ENCODE measurements at regions of chr1 and their contacts with region 1.

Region 1: DNA sequence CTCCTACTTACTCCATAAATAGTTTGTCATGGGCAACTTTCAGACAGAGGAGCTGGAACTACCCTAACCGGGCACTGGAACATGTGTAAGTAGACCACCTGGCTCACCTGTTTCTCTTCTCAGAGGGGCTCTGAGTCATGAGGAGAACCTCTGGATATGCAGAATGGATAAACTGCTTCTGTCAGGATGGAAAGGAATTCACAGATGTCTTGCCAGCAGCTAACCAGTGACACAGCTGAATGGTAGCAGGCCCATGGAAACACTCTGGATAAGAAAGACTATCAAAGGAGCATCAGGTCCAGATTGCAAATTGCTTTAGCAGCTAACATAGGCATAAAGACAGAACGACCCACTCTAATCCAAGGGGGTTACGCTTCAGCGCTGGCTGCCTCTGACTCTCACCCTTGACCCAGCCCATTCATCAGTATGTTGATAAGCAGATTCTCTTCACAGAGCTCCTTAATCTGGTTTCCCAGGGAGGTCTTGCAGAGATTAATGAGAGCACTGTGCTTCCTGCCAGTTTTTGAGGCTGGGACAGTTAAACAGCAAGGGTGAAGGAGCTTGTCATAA is 54.2 kb downstream of the HIVEP3 start:
- DNase-seq: no peak
- H3K4me3 ChIP-seq: no peak overlapping the region
- H3K27ac ChIP-seq: no peak overlapping the region
- H3K4me1 ChIP-seq: peaks cover 6 to 33% (median 21%) of the 10 kb centered on the region in 4 experiments
- H3K27me3 ChIP-seq: no peaks in the 10 kb centered on the region

Region 2: DNA sequence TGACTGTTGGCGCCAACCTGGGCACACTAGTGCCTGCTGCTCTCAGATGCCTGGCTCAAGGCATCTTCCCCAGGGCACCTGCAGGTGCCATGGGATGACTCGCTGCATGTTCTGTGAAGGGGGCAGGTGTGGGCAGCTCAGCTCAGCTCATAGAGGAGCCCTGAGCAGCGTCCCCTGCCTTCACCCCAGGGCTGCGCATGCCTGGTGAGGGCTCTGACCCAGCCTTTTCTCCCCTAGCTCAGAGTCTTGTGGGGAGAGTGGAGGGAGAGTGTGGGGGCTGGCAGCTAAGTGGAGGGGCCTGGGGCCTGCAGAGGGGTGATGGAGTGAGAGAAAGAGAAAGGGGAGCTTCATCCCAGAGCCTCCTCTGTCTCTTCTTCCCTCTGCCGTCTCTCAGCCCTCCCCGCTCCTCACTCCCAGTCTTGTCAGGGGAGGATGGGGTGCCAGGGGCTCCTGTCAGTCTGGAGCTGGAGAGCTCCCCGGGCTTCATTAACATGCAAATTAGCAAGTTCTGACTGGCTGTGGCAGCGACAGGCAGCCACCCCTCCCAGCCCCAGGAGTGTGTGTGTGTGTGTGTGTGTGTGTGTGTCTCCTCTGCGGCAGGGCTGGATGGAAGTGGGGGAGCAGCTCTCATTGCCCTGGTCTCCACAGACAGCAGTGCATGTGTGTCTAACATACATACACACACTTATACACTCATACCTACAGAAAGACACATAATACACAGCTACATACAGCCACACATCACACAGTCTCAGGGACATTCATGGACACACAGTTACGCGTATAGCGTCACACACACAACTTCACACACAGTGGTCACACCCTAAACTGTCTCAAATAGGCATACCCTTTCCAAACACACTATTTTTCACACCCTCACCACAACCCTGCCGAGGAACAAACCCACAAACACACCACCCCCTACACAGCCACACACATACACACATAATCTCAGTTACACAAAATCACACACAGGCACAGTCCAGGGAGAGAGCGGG is 469.3 kb before region 1 on chr1:
- CTCF ChIA-PET with region 1: no interaction called
- POLR2A ChIA-PET with region 1: no interaction called
- DNase-seq: peak in 2 of 3 donors; percentile 48 to 65
- H3K4me3 ChIP-seq: no peak overlapping the region
- H3K27ac ChIP-seq: no peak overlapping the region
- H3K4me1 ChIP-seq: no peaks in the 10 kb centered on the region
- H3K27me3 ChIP-seq: peaks cover 0 to 25% (median 13%) of the 10 kb centered on the region in 5 experiments

Region 3: DNA sequence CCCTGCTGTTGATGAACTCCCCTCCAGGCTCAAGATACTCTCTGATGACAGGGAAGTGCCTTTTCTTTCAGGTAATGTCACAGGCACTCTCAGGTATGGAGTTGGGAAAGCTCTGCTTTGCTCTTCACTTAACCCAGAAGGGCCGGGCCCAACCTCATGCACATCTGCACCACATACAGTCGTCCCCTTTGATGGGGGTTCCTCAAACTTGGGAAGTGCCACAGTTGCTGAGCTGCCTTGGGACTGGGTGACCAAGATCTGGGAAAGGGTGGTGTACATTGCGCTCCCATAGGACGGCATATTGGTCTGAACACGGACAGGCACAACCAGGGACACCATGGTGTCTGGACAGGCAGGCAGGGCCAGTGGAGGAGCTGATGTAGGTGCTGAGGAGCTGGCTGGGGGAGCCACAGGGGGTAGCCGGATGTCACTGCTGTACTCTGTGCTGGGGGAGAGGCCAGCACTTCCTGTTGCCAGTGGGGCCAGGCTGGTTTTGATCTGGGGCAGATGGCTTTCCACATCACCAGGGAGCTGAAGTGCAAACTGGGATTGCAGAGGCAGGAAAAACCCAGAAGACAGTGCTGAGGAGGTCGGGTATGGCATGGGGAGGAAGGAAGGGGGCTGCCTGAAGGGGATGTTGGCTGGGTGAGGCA is 283.9 kb before region 1 on chr1:
- CTCF ChIA-PET with region 1: no interaction called
- POLR2A ChIA-PET with region 1: no interaction called
- DNase-seq: peak in 1 of 3 donors; percentile 10
- H3K4me3 ChIP-seq: no peak overlapping the region
- H3K27ac ChIP-seq: no peak overlapping the region
- H3K4me1 ChIP-seq: peaks cover 0 to 31% (median 12%) of the 10 kb centered on the region in 4 experiments
- H3K27me3 ChIP-seq: no peaks in the 10 kb centered on the region

Region 4: GRCh38 chr1:41842993-41843755 is 21.4 kb before region 1 on chr1:
- CTCF ChIA-PET with region 1: no interaction called
- POLR2A ChIA-PET with region 1: no interaction called
- DNase-seq: peak; percentile 20 to 60 (median 53)
- H3K4me3 ChIP-seq: no peak overlapping the region
- H3K27ac ChIP-seq: no peak overlapping the region
- H3K4me1 ChIP-seq: peaks cover 0 to 18% (median 12%) of the 10 kb centered on the region in 4 experiments
- H3K27me3 ChIP-seq: no peaks in the 10 kb centered on the region

Region 5: GRCh38 chr1:41891199-41891896 is 26.8 kb after region 1 on chr1:
- CTCF ChIA-PET with region 1: interaction called, 12 read pairs
- POLR2A ChIA-PET with region 1: no interaction called
- DNase-seq: peak; percentile 80 to 92 (median 87)
- H3K4me3 ChIP-seq: peak overlapping the region in 6 of 7 experiments; percentile 63 to 74 (median 71)
- H3K27ac ChIP-seq: peak overlapping the region; percentile 58 to 85
- H3K4me1 ChIP-seq: peaks cover 15 to 71% (median 55%) of the 10 kb centered on the region in 4 experiments
- H3K27me3 ChIP-seq: no peaks in the 10 kb centered on the region

Region 6: DNA sequence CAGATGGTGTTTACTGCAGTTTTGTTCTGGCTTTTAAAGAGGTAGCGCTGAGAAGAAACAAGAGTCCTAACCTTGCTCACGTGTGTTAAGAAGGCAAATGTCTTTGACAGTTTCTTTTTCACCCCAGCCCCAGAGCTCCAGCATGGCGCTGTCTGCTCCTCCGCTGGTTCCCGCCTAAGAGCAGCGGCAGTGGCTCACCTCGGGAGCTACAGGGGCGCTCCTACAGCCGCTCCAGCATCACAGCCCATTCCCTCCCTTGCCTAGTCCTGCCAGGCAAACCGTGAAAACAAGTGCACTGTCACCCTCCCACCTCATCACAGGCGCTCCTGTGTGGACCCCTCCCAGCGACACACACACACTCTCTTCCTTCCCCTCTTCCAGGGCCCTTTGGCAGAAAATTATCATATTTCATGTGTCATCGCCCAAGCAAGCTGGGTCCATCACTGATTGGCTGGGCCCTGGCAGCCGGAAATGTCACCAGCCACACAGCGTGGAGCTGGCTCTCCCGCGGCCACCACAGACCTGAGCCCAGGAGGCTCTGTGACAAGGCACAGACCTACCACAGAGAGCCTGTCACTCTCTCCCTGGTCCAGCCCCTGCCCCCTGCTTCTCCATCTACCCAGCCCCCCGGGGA is 55.3 kb after region 1 on chr1:
- CTCF ChIA-PET with region 1: no interaction called
- POLR2A ChIA-PET with region 1: no interaction called
- DNase-seq: peak; percentile 88 to 98 (median 95)
- H3K4me3 ChIP-seq: peak overlapping the region in 6 of 7 experiments; percentile 39 to 92 (median 56)
- H3K27ac ChIP-seq: peak overlapping the region; percentile 55 to 79
- H3K4me1 ChIP-seq: peaks cover 20 to 53% (median 44%) of the 10 kb centered on the region in 4 experiments
- H3K27me3 ChIP-seq: no peaks in the 10 kb centered on the region